HCT116 (cell line): ENCODE measurements at regions of chr9 and their contacts with region 1.

Region 1: GRCh38 chr9:112097712-112098688 is 77.1 kb downstream of the SUSD1 start:
- DNase-seq: peak; percentile 62
- ATAC-seq: peak; percentile 94
- H3K4me3 ChIP-seq: no peak overlapping the region
- H3K27ac ChIP-seq: no peak overlapping the region
- H3K4me1 ChIP-seq: peaks cover 0 to 7% of the 10 kb centered on the region in 2 experiments; a peak in 3 of 4 replicates
- H3K27me3 ChIP-seq: no peaks in the 10 kb centered on the region
- CTCF ChIP-seq: peak; percentile 83 to 90 (median 84)
- POLR2A ChIP-seq: no peak
- RAD21 ChIP-seq: peak; percentile 89

Region 2: GRCh38 chr9:112361601-112362000 is 263.6 kb after region 1 on chr9:
- CTCF ChIA-PET with region 1: interaction called, 7 read pairs
- POLR2A ChIA-PET with region 1: no interaction called
- RAD21 ChIA-PET with region 1: interaction called in 1 of 2 experiments, 4 read pairs
- intact Hi-C with region 1: loop called (anchors 5 kb)
- DNase-seq: peak; percentile 33
- ATAC-seq: 0 out of 2 replicates have a peak, but pooled peaks have one; percentile 50
- H3K4me3 ChIP-seq: no peak overlapping the region
- H3K27ac ChIP-seq: no peak overlapping the region
- H3K4me1 ChIP-seq: peaks cover 7 to 10% of the 10 kb centered on the region in 2 experiments; a peak in 3 of 4 replicates
- H3K27me3 ChIP-seq: no peaks in the 10 kb centered on the region
- CTCF ChIP-seq: peak in 2 of 3 experiments; percentile 58 to 86; a peak in 4 of 6 replicates
- POLR2A ChIP-seq: no peak
- RAD21 ChIP-seq: peak; percentile 86

Region 3: DNA sequence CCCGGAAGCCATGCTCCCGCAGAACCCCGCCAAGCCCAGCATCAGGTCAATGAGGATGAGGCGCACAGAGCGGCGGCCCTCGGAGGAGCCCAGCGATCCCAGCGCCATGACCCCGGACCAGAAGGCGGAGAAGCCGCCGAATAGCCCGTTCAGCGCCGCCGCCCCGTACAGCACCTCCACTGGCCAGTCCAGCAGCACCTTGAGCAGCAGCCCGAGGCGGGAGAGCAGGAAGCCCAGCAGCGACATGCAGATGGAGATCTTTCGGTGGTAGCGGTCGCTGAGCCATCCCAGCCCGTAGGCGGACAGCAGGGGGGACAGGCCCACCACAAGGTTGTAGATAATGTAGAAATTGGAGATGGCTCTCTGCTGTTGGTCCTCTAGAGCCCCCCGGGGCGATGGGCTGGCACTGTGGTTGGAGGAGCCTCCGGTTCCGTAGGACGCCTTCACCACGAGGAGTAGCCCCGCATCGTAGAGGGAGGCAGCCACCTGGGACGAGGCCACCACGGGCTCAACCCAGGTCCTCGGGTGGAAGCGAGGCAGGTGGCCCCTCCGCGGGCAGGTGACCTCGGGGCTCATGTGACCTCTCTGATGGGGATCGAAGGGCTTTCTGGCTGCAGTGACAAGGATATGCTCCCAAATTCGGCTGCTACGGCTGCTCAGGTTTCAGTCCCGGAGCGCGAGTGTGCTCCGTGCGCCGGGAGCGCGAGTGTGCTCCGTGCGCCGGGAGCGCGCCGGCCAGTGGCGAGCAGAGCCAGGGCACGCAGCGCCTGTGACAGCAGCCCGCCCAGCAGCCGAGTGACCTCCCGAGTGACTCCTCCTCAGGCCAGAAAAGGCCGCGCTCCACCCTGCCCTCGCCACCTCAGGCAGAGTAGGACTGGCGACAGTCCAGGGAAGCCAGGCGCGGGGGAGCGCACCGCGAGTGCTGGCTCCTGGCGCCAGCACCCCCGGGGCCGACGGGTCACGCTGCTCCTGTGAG is 792.4 kb after region 1 on chr9 and contains the start of gene SLC46A2:
- CTCF ChIA-PET with region 1: no interaction called
- POLR2A ChIA-PET with region 1: no interaction called
- RAD21 ChIA-PET with region 1: no interaction called
- intact Hi-C with region 1: loop called (anchors 10 kb)
- DNase-seq: no peak
- ATAC-seq: no peak
- H3K4me3 ChIP-seq: no peak within 1 kb of the TSS
- H3K27ac ChIP-seq: no peak within 1 kb of the TSS
- H3K4me1 ChIP-seq: no peaks in the 10 kb centered on the region
- H3K27me3 ChIP-seq: no peaks in the 10 kb centered on the region
- CTCF ChIP-seq: no peak
- POLR2A ChIP-seq: no peak
- RAD21 ChIP-seq: no peak
- total RNA-seq, gene SLC46A2: not detected